WTC11 (cell line): ENCODE measurements at regions of chr1 and their contacts with region 1.

Region 1: GRCh38 chr1:65687428-65688214 is 105.1 kb upstream of the PDE4B start:
- DNase-seq: peak; percentile 88
- ATAC-seq: peak; percentile 92
- H3K4me3 Mint-ChIP-seq: no peak overlapping the region
- H3K27ac Mint-ChIP-seq: no peak overlapping the region
- H3K4me1 Mint-ChIP-seq: peaks cover 8% of the 10 kb centered on the region
- H3K27me3 Mint-ChIP-seq: peaks cover 5% of the 10 kb centered on the region; the same call in 1 of the 2 replicates
- CTCF ChIP-seq: peak; percentile 96

Region 2: GRCh38 chr1:65230731-65231481 is 456.7 kb before region 1 on chr1:
- CTCF ChIA-PET with region 1: interaction called, 25 read pairs
- POLR2A ChIA-PET with region 1: no interaction called
- DNase-seq: no peak
- ATAC-seq: no peak
- H3K4me3 Mint-ChIP-seq: no peak overlapping the region
- H3K27ac Mint-ChIP-seq: 0 out of 2 replicates have a peak overlapping the region, but pooled peaks have one; percentile 12
- H3K4me1 Mint-ChIP-seq: peaks cover 18% of the 10 kb centered on the region
- H3K27me3 Mint-ChIP-seq: no peaks in the 10 kb centered on the region
- CTCF ChIP-seq: no peak

Region 3: DNA sequence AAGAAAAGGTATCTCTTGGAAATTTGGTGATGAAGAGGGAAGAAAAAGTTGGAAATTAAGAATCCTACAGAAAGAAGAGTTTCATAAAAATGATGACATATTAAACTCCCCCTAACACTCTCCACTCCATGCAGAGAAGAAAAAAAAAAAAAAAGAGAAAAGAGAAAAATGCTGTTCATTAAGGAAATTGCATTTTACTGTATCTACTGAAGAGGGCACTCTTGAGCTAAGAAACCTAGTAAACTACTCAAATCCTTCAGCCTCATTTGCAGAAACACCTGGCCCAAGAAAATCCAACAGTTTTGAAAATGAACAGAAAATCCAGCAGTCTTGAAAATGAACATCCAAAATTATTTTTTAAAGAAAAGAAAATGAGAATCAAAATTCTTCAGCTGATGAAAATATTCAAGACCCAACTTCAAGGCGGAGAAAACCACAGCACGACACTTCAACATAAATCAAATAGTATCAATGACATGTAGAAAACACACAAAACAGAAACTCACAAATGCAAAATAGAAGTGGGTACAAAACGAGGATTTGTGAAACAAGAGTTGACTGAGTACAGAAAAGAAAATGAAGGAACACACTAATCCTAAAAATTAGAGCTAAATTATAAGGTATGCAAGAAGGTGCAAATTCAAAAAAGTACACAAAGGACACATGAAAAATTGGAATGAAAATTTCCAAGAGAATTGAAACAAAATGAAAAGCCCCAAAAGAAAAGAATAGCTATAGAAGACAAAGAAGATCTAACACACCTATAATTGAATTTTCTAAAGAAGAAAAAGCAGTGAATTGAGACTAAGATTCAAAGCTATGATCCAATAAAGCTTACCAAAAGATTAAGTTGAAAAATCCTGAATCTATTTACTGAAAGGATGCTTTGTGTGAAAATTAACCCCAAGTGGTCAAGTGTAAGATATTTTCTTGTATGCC is 451.5 kb before region 1 on chr1:
- CTCF ChIA-PET with region 1: interaction called, 25 read pairs
- POLR2A ChIA-PET with region 1: no interaction called
- DNase-seq: no peak
- ATAC-seq: peak; percentile 55
- H3K4me3 Mint-ChIP-seq: no peak overlapping the region
- H3K27ac Mint-ChIP-seq: no peak overlapping the region
- H3K4me1 Mint-ChIP-seq: peaks cover 8% of the 10 kb centered on the region; the same call in 1 of the 2 replicates
- H3K27me3 Mint-ChIP-seq: no peaks in the 10 kb centered on the region
- CTCF ChIP-seq: peak; percentile 49; the same call in 1 of the 2 replicates

Region 4: GRCh38 chr1:65419681-65420589 is 267.7 kb before region 1 on chr1:
- CTCF ChIA-PET with region 1: interaction called, 18 read pairs
- POLR2A ChIA-PET with region 1: no interaction called
- DNase-seq: peak; percentile 99
- ATAC-seq: peak; percentile 93
- H3K4me3 Mint-ChIP-seq: no peak overlapping the region; the same call in none of the 2 replicates
- H3K27ac Mint-ChIP-seq: peak overlapping the region; percentile 97
- H3K4me1 Mint-ChIP-seq: peaks cover 34% of the 10 kb centered on the region
- H3K27me3 Mint-ChIP-seq: no peaks in the 10 kb centered on the region
- CTCF ChIP-seq: no peak

Region 5: GRCh38 chr1:65431111-65431705 is 256.4 kb before region 1 on chr1:
- CTCF ChIA-PET with region 1: interaction called, 17 read pairs
- POLR2A ChIA-PET with region 1: no interaction called
- DNase-seq: no peak
- ATAC-seq: no peak
- H3K4me3 Mint-ChIP-seq: no peak overlapping the region
- H3K27ac Mint-ChIP-seq: no peak overlapping the region
- H3K4me1 Mint-ChIP-seq: peaks cover 41% of the 10 kb centered on the region
- H3K27me3 Mint-ChIP-seq: no peaks in the 10 kb centered on the region
- CTCF ChIP-seq: peak; percentile 43

Region 6: DNA sequence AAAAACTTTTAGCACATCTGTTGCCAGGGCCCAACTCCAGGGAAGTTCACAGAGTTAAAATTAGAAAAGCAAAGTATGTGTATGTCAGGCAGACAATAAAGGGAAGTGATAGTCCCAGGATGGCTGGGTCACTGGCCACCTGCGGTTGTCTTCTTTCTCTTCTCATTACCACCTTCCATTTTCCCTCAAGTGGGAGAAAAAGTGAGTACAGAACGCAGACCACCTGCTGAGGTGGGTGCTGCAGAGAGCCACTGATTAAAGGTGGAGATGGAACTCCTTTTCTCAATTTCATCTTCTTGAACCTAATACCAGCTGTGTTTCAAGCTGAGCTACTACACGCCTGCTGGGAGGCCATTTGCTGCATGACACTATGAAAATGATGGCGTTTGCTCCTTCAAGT is 16.2 kb after region 1 on chr1:
- CTCF ChIA-PET with region 1: interaction called, 14 read pairs
- POLR2A ChIA-PET with region 1: interaction called, 3 read pairs
- DNase-seq: no peak
- ATAC-seq: no peak
- H3K4me3 Mint-ChIP-seq: no peak overlapping the region
- H3K27ac Mint-ChIP-seq: no peak overlapping the region
- H3K4me1 Mint-ChIP-seq: peaks cover 2% of the 10 kb centered on the region
- H3K27me3 Mint-ChIP-seq: no peaks in the 10 kb centered on the region
- CTCF ChIP-seq: no peak